ENCODE measurements at regions of chr6 and their contacts with region 1.

Region 1: DNA sequence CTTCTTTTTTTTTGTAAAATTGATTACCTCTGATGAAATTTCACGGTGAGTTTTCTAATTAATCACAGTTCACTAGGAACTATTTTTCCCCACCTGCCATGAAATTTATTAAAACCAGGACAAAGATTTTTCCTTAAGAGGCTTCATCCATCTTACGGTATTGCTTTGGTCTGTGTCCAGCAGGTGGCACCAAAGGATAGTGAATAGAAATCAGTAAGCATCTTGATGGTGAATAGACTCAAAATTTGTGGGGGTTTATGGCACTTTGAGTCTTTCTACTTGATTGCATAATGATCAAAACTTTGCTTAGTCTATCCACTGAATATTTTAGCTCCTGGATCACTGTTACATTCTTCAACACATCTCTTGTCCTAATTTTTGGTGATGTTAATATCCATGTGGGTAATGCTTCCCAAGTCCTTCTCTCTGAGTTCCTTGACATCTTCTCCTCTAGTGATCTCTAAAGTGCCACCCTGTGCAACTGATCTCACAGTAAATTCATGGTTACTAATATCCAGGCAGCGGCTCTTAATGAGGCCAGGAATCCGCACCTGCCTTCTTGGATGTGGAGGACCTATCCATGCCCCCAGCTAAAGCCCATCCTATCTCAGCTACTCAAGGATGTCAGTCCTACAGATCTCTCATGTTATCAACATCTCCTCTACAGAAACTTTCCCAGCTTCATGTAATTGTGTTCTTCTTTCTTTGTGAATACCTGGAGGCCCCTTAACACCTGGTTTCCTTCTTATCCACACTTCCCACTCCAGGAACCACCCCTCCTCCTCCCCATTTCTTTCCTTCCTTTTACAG is 54.5 kb downstream of the STMND1 start:
- DNase-seq: no peak
- ATAC-seq: peak; percentile 77

Region 2: GRCh38 chr6:16883414-16883813 is 272.9 kb before region 1 on chr6:
- intact Hi-C with region 1: no loop called
- DNase-seq: no peak
- ATAC-seq: no peak

Region 3: DNA sequence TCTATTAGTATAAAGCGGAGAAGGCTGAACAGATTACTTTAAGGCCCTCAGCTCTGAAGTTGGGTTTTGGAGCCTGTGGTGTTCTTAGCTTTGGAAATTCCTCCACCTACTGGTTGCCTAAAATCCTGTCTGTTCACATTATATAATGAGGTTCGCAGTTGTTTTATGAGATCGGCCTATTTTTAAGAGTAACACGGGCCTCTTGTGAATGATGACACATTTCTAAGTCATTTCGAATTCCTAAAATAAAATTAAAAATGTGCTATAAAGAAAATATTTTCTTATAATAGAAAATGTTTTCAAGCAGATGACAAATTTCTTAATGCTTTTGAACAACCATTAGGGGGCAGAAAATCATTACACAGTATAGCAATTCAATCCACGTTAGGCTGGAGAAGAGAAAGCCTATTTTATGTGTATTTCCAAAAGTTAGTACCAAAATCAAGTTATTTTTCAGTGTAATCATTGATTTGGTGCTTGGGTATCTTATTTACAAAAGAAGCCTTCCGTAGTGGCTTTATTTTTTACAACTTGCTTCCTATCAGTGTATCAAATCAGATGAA is 428.0 kb after region 1 on chr6:
- intact Hi-C with region 1: loop called (anchors 2 kb)
- DNase-seq: no peak
- ATAC-seq: peak; percentile 90

Region 4: DNA sequence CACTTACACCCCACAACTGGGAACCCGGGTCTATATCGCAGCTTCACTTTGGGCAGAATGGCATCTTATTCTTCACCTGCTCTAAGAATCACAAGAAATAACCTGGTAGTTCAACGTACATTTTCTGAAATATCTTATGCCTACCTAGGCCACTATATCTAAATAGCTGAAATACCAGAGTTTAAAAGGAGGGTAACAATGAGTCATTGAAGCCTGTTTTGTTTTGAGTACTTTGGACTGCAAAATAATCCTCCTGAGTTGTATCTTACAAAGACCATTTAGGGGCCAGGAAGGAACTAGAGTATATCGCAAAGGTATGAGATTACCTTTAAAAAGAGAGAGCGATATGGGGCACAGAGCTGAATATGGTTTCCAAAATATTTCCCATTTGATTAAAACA is 647.1 kb after region 1 on chr6:
- intact Hi-C with region 1: loop called (anchors 5 kb)
- DNase-seq: no peak
- ATAC-seq: no peak